HepG2 (cell line): ENCODE measurements at regions of chr7 and their contacts with region 1.

Region 1: GRCh38 chr7:47610506-47611044 is 28.7 kb upstream of the TNS3 start:
- DNase-seq: peak; percentile 85
- ATAC-seq: peak; percentile 80
- H3K4me3 ChIP-seq: peak overlapping the region; percentile 34 to 59 (median 38)
- H3K27ac ChIP-seq: peak overlapping the region; percentile 71
- H3K4me1 ChIP-seq: peaks cover 61% of the 10 kb centered on the region
- H3K27me3 ChIP-seq: no peaks in the 10 kb centered on the region
- CTCF ChIP-seq: no peak
- EP300 ChIP-seq: peak in 1 of 2 experiments; percentile 60; a peak in 2 of 4 replicates
- POLR2A ChIP-seq: 0 out of 4 replicates have a peak, but pooled peaks of 1 of the 2 experiments have one; percentile 23
- RAD21 ChIP-seq: no peak

Region 2: GRCh38 chr7:47453093-47454049 is 157.2 kb before region 1 on chr7:
- CTCF ChIA-PET with region 1: no interaction called
- POLR2A ChIA-PET with region 1: no interaction called
- in situ Hi-C with region 1: no loop called
- intact Hi-C with region 1: no loop called
- DNase-seq: no peak
- ATAC-seq: no peak
- H3K4me3 ChIP-seq: no peak overlapping the region
- H3K27ac ChIP-seq: no peak overlapping the region
- H3K4me1 ChIP-seq: peaks cover 28% of the 10 kb centered on the region
- H3K27me3 ChIP-seq: no peaks in the 10 kb centered on the region
- CTCF ChIP-seq: no peak
- EP300 ChIP-seq: no peak
- POLR2A ChIP-seq: no peak
- RAD21 ChIP-seq: no peak

Region 3: DNA sequence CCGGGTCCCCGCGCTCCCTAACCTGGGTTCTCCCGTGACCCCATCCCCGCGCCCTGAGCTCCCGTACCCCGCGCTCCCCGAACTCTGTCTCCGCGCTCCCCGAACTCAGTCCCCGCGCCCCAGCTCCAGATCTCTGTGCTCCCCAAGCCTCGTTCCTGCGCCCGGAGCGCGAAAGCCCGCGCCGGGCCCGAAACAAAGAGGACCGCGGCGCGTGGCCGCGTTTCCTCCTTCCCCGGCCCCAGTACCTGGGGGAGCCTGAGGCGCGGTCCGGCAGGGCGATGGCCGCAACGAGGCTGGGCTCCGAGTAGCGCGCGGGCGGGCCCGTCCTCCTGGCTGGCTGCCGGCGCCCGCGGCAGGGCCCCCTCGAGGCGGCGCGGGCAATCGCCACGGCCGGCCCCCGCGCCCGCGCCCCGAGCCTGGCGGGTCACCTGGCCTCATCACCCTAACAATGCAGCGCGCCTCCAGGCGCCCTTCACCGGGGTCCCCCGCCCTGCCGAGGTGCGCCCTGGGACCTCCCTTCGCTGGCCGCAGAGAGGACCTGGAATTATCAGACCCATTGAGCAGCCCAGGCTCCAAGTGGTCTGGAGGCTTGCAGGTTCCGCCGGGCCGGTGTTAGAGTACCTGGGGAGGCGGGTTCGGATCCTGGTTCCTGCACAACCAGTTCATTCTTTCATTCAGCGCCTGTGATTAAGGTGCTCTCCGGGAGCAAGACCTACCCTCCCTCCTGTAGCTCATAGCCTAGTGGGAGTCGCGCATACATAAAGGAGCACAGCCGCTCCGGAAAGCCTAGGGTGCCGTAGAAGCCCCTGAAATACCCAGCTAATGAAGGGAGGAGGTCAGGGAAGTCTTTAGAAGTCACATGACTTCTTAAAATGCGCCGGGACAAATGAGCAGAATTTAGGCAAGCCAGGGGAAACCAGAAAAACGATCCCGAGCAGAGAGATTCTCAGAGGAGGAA is 28.5 kb before region 1 on chr7 and contains the start of gene TNS3:
- CTCF ChIA-PET with region 1: no interaction called
- POLR2A ChIA-PET with region 1: interaction called, 25 read pairs
- in situ Hi-C with region 1: no loop called
- intact Hi-C with region 1: loop called (anchors 2 kb)
- DNase-seq: no peak
- ATAC-seq: peak; percentile 83
- H3K4me3 ChIP-seq: peak within 1 kb of the TSS; percentile 86 to 91 (median 89)
- H3K27ac ChIP-seq: peak within 1 kb of the TSS; percentile 82
- H3K4me1 ChIP-seq: peaks cover 56% of the 10 kb centered on the region
- H3K27me3 ChIP-seq: no peaks in the 10 kb centered on the region; a peak in 1 of 5 replicates
- CTCF ChIP-seq: peak; percentile 26; the same call in 1 of the 2 replicates
- EP300 ChIP-seq: no peak
- POLR2A ChIP-seq: peak; percentile 25 to 39; a peak in 2 of 4 replicates
- RAD21 ChIP-seq: peak; percentile 89
- total RNA-seq, gene TNS3: 51.3 and 55.7 TPM in 2 replicates

Region 4: GRCh38 chr7:47622946-47623640 is 12.5 kb after region 1 on chr7:
- CTCF ChIA-PET with region 1: no interaction called
- POLR2A ChIA-PET with region 1: interaction called, 33 read pairs
- in situ Hi-C with region 1: no loop called
- intact Hi-C with region 1: loop called (anchors 2 kb)
- DNase-seq: peak; percentile 89
- ATAC-seq: peak; percentile 93
- H3K4me3 ChIP-seq: peak overlapping the region in 2 of 3 experiments; percentile 13 to 46; a peak in 2 of 6 replicates
- H3K27ac ChIP-seq: peak overlapping the region; percentile 71
- H3K4me1 ChIP-seq: peaks cover 64% of the 10 kb centered on the region
- H3K27me3 ChIP-seq: no peaks in the 10 kb centered on the region
- CTCF ChIP-seq: no peak
- EP300 ChIP-seq: peak in 1 of 2 experiments; percentile 58; a peak in 1 of 4 replicates
- POLR2A ChIP-seq: peak in 1 of 2 experiments; percentile 54; a peak in 2 of 4 replicates
- RAD21 ChIP-seq: no peak

Region 5: GRCh38 chr7:47730142-47730541 is 119.6 kb after region 1 on chr7:
- CTCF ChIA-PET with region 1: no interaction called
- POLR2A ChIA-PET with region 1: interaction called, 3 read pairs
- in situ Hi-C with region 1: no loop called
- intact Hi-C with region 1: loop called (anchors 1 kb)
- DNase-seq: no peak
- ATAC-seq: no peak
- H3K4me3 ChIP-seq: no peak overlapping the region
- H3K27ac ChIP-seq: no peak overlapping the region
- H3K4me1 ChIP-seq: peaks cover 60% of the 10 kb centered on the region
- H3K27me3 ChIP-seq: no peaks in the 10 kb centered on the region
- CTCF ChIP-seq: no peak
- EP300 ChIP-seq: no peak
- POLR2A ChIP-seq: no peak
- RAD21 ChIP-seq: no peak

Region 6: DNA sequence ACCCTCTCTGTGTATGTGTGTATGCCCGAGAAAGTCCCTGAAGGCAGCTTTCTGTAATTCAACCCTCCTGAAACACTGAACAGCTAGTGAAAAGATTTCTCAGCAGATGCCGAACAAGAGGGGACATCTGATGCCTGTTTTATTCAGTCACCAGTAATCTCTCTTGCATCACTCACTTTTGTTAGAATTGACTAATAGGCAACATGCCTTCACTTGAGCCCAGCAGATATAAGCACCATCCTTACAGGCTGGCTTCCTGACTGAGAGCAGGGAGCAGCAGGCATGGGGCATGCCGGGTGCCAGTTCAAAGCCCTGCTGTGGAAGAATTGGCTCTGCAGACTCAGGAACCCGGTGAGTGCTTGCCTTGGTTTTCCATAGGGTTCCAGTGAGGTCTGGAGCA is 560.6 kb after region 1 on chr7 and contains the start of gene ABCA13:
- CTCF ChIA-PET with region 1: no interaction called
- POLR2A ChIA-PET with region 1: no interaction called
- in situ Hi-C with region 1: no loop called
- intact Hi-C with region 1: no loop called
- DNase-seq: no peak
- ATAC-seq: no peak
- H3K4me3 ChIP-seq: no peak within 1 kb of the TSS
- H3K27ac ChIP-seq: no peak within 1 kb of the TSS
- H3K4me1 ChIP-seq: no peaks in the 10 kb centered on the region
- H3K27me3 ChIP-seq: no peaks in the 10 kb centered on the region
- CTCF ChIP-seq: no peak
- EP300 ChIP-seq: no peak
- POLR2A ChIP-seq: no peak
- RAD21 ChIP-seq: no peak
- total RNA-seq, gene ABCA13: not detected in 2 replicates

Region 7: DNA sequence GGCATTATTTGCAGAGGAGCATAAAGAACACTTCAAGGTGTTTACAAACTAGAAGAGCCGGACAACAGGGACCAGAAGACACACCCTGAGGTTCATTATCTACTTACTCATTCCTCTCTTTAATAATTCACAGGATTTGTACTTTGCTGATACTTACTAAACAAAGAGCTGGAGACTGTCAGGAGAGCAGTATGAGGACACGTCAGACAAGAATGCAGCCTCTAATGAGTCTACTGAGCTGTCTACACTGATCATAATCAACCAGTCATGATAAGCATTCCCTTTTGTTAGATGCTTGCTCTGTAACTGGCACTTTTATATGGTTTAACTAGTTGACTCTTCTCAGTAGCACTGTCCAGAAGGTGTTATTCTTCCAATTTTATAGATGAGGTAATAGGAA is 1070.4 kb after region 1 on chr7:
- CTCF ChIA-PET with region 1: no interaction called
- POLR2A ChIA-PET with region 1: no interaction called
- in situ Hi-C with region 1: no loop called
- intact Hi-C with region 1: no loop called
- DNase-seq: no peak
- ATAC-seq: no peak
- H3K4me3 ChIP-seq: no peak overlapping the region
- H3K27ac ChIP-seq: no peak overlapping the region
- H3K4me1 ChIP-seq: no peaks in the 10 kb centered on the region
- H3K27me3 ChIP-seq: no peaks in the 10 kb centered on the region
- CTCF ChIP-seq: no peak
- EP300 ChIP-seq: no peak
- POLR2A ChIP-seq: no peak
- RAD21 ChIP-seq: no peak